ENCODE measurements at regions of chr6 and their contacts with region 1.

Region 1: GRCh38 chr6:122258839-122259238 is 140.6 kb upstream of the HSF2 start:
- DNase-seq: no peak
- H3K4me3 ChIP-seq: no peak overlapping the region
- CTCF ChIP-seq: no peak
- POLR2A ChIP-seq: no peak

Region 2: DNA sequence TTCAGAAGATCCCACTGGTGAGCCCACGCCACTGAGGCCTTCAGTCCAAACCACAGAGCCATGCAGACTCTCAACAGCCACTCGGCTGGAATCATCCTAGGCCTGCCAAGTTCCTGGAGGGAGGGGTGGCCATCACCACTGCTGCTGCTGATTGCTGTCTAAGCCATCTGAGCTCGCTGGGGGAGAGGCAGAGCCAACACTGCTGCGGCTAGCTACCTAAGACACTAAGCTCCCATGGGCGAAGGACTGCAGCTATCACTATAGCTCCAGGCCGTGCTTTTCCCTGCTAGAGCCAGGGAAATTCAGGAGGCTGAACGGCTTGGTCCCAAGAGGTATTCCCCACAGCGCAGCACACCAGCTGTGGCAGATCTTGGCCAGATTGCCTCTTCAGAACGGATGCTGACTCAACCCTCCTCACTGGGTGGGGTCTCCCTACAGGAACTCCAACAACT is 998.2 kb before region 1 on chr6:
- intact Hi-C with region 1: loop called (anchors 5 kb)
- DNase-seq: no peak
- H3K4me3 ChIP-seq: no peak overlapping the region
- CTCF ChIP-seq: no peak
- POLR2A ChIP-seq: no peak

Region 3: GRCh38 chr6:121849477-121849876 is 409.4 kb before region 1 on chr6:
- intact Hi-C with region 1: no loop called
- DNase-seq: peak in 1 of 2 donors; percentile 31
- H3K4me3 ChIP-seq: no peak overlapping the region
- CTCF ChIP-seq: no peak
- POLR2A ChIP-seq: no peak

Region 4: GRCh38 chr6:122381497-122382265 is 122.8 kb after region 1 on chr6:
- intact Hi-C with region 1: no loop called
- DNase-seq: peak in 1 of 2 donors; percentile 46
- H3K4me3 ChIP-seq: no peak overlapping the region
- CTCF ChIP-seq: no peak
- POLR2A ChIP-seq: no peak